Breast epithelium (tissue), 4 donors: ENCODE measurements at regions of chr5 and their contacts with region 1.

Region 1: GRCh38 chr5:112186401-112186990 is 232.6 kb downstream of the EPB41L4A start:
- DNase-seq: no peak
- H3K4me3 ChIP-seq: no peak overlapping the region
- H3K27ac ChIP-seq: no peak overlapping the region
- H3K4me1 ChIP-seq: no peaks in the 10 kb centered on the region
- H3K27me3 ChIP-seq: no peaks in the 10 kb centered on the region
- CTCF ChIP-seq: peak in 2 of 3 donors; percentile 17 to 19
- POLR2A ChIP-seq: no peak

Region 2: GRCh38 chr5:112289465-112289864 is 103.0 kb after region 1 on chr5:
- intact Hi-C with region 1: no loop called
- DNase-seq: no peak
- H3K4me3 ChIP-seq: no peak overlapping the region
- H3K27ac ChIP-seq: no peak overlapping the region
- H3K4me1 ChIP-seq: no peaks in the 10 kb centered on the region
- H3K27me3 ChIP-seq: no peaks in the 10 kb centered on the region
- CTCF ChIP-seq: no peak
- POLR2A ChIP-seq: no peak

Region 3: GRCh38 chr5:112554101-112554977 is 367.8 kb after region 1 on chr5:
- intact Hi-C with region 1: no loop called
- DNase-seq: no peak
- H3K4me3 ChIP-seq: peak overlapping the region in 1 of 3 donors; percentile 39
- H3K27ac ChIP-seq: peak overlapping the region in 1 of 2 donors; percentile 19
- H3K4me1 ChIP-seq: no peaks in the 10 kb centered on the region
- H3K27me3 ChIP-seq: no peaks in the 10 kb centered on the region
- CTCF ChIP-seq: no peak
- POLR2A ChIP-seq: no peak

Region 4: GRCh38 chr5:113513384-113514288 is 1327.1 kb after region 1 on chr5 and contains the start of gene YTHDC2:
- intact Hi-C with region 1: loop called (anchors 5 kb)
- DNase-seq: peak; percentile 80 to 83
- H3K4me3 ChIP-seq: peak within 1 kb of the TSS; percentile 61 to 93 (median 91)
- H3K27ac ChIP-seq: peak within 1 kb of the TSS; percentile 93 to 98
- H3K4me1 ChIP-seq: no peaks in the 10 kb centered on the region
- H3K27me3 ChIP-seq: no peaks in the 10 kb centered on the region
- CTCF ChIP-seq: no peak
- POLR2A ChIP-seq: no peak
- total RNA-seq, gene YTHDC2: 22.4 to 49.2 (median 40.0) TPM